CD14-positive monocyte (primary cell): ENCODE measurements at regions of chr15 and their contacts with region 1.

Region 1: GRCh38 chr15:90165659-90166421 is 35.3 kb upstream of the SEMA4B start:
- DNase-seq: peak; percentile 84 to 96 (median 85)
- H3K4me3 ChIP-seq: no peak overlapping the region
- H3K4me3 Mint-ChIP-seq: no peak overlapping the region
- H3K27ac ChIP-seq: peak overlapping the region in 1 of 2 donors; percentile 9
- H3K27ac Mint-ChIP-seq: peak overlapping the region; percentile 21 to 78 (median 57)
- H3K4me1 ChIP-seq: peaks cover 40 to 53% of the 10 kb centered on the region in 2 donors
- H3K4me1 Mint-ChIP-seq: peaks cover 46% of the 10 kb centered on the region
- H3K27me3 ChIP-seq: no peaks in the 10 kb centered on the region
- H3K27me3 Mint-ChIP-seq: peaks cover 0 to 2% (median 0%) of the 10 kb centered on the region in 3 donors
- CTCF ChIP-seq: no peak

Region 2: GRCh38 chr15:90209591-90209990 is 43.8 kb after region 1 on chr15:
- intact Hi-C with region 1: loop called in 1 of 2 experiments (anchors 5 kb)
- DNase-seq: no peak
- H3K4me3 ChIP-seq: no peak overlapping the region
- H3K4me3 Mint-ChIP-seq: no peak overlapping the region
- H3K27ac ChIP-seq: no peak overlapping the region
- H3K27ac Mint-ChIP-seq: peak overlapping the region in 2 of 7 donors; percentile 2 to 35
- H3K4me1 ChIP-seq: peaks cover 35 to 64% of the 10 kb centered on the region in 2 donors
- H3K4me1 Mint-ChIP-seq: peaks cover 70% of the 10 kb centered on the region
- H3K27me3 ChIP-seq: no peaks in the 10 kb centered on the region
- H3K27me3 Mint-ChIP-seq: peaks cover 0 to 2% (median 0%) of the 10 kb centered on the region in 3 donors
- CTCF ChIP-seq: no peak

Region 3: GRCh38 chr15:90286678-90287077 is 120.8 kb after region 1 on chr15:
- intact Hi-C with region 1: no loop called
- DNase-seq: peak in 1 of 3 donors; percentile 27
- H3K4me3 ChIP-seq: no peak overlapping the region
- H3K4me3 Mint-ChIP-seq: no peak overlapping the region
- H3K27ac ChIP-seq: no peak overlapping the region
- H3K27ac Mint-ChIP-seq: no peak overlapping the region
- H3K4me1 ChIP-seq: peaks cover 0 to 4% of the 10 kb centered on the region in 2 donors
- H3K4me1 Mint-ChIP-seq: peaks cover 3% of the 10 kb centered on the region
- H3K27me3 ChIP-seq: no peaks in the 10 kb centered on the region
- H3K27me3 Mint-ChIP-seq: peaks cover 0 to 4% (median 0%) of the 10 kb centered on the region in 3 donors
- CTCF ChIP-seq: peak; percentile 57